MCF 10A (cell line): ENCODE measurements at regions of chr12 and their contacts with region 1.

Region 1: GRCh38 chr12:27523642-27524493 is at the start of gene PPFIBP1:
- DNase-seq: peak; percentile 99
- H3K4me3 Mint-ChIP-seq: peak within 1 kb of the TSS; percentile 85
- H3K27ac Mint-ChIP-seq: peak within 1 kb of the TSS; percentile 90
- H3K4me1 Mint-ChIP-seq: peaks cover 23% of the 10 kb centered on the region
- H3K27me3 Mint-ChIP-seq: no peaks in the 10 kb centered on the region
- CTCF ChIP-seq: no peak
- total RNA-seq, gene PPFIBP1: 82.6 and 87.7 TPM in 2 replicates

Region 2: GRCh38 chr12:27332407-27333301 is 191.2 kb before region 1 on chr12 and contains the start of gene BMAL2:
- CTCF ChIA-PET with region 1: no interaction called
- POLR2A ChIA-PET with region 1: interaction called, 12 read pairs
- intact Hi-C with region 1: no loop called
- DNase-seq: peak; percentile 36
- H3K4me3 Mint-ChIP-seq: peak within 1 kb of the TSS; percentile 86
- H3K27ac Mint-ChIP-seq: peak within 1 kb of the TSS; percentile 98
- H3K4me1 Mint-ChIP-seq: peaks cover 47% of the 10 kb centered on the region
- H3K27me3 Mint-ChIP-seq: no peaks in the 10 kb centered on the region
- CTCF ChIP-seq: no peak
- total RNA-seq, gene BMAL2: 18.0 and 20.0 TPM in 2 replicates

Region 3: GRCh38 chr12:27504507-27504906 is 19.4 kb before region 1 on chr12:
- CTCF ChIA-PET with region 1: no interaction called
- POLR2A ChIA-PET with region 1: interaction called, 11 read pairs
- intact Hi-C with region 1: no loop called
- DNase-seq: no peak
- H3K4me3 Mint-ChIP-seq: no peak overlapping the region
- H3K27ac Mint-ChIP-seq: no peak overlapping the region
- H3K4me1 Mint-ChIP-seq: no peaks in the 10 kb centered on the region
- H3K27me3 Mint-ChIP-seq: no peaks in the 10 kb centered on the region
- CTCF ChIP-seq: no peak

Region 4: GRCh38 chr12:27542628-27543027 is 18.8 kb after region 1 on chr12:
- CTCF ChIA-PET with region 1: interaction called, 17 read pairs
- POLR2A ChIA-PET with region 1: interaction called, 129 read pairs
- intact Hi-C with region 1: loop called (anchors 1 kb)
- DNase-seq: peak; percentile 80
- H3K4me3 Mint-ChIP-seq: peak overlapping the region; percentile 46
- H3K27ac Mint-ChIP-seq: peak overlapping the region; percentile 99
- H3K4me1 Mint-ChIP-seq: peaks cover 40% of the 10 kb centered on the region
- H3K27me3 Mint-ChIP-seq: no peaks in the 10 kb centered on the region
- CTCF ChIP-seq: no peak

Region 5: GRCh38 chr12:27592548-27592947 is 68.7 kb after region 1 on chr12:
- CTCF ChIA-PET with region 1: interaction called, 4 read pairs
- POLR2A ChIA-PET with region 1: interaction called, 30 read pairs
- intact Hi-C with region 1: loop called (anchors 1 kb)
- DNase-seq: peak; percentile 88
- H3K4me3 Mint-ChIP-seq: peak overlapping the region; percentile 30
- H3K27ac Mint-ChIP-seq: peak overlapping the region; percentile 97
- H3K4me1 Mint-ChIP-seq: peaks cover 65% of the 10 kb centered on the region
- H3K27me3 Mint-ChIP-seq: no peaks in the 10 kb centered on the region
- CTCF ChIP-seq: no peak

Region 6: DNA sequence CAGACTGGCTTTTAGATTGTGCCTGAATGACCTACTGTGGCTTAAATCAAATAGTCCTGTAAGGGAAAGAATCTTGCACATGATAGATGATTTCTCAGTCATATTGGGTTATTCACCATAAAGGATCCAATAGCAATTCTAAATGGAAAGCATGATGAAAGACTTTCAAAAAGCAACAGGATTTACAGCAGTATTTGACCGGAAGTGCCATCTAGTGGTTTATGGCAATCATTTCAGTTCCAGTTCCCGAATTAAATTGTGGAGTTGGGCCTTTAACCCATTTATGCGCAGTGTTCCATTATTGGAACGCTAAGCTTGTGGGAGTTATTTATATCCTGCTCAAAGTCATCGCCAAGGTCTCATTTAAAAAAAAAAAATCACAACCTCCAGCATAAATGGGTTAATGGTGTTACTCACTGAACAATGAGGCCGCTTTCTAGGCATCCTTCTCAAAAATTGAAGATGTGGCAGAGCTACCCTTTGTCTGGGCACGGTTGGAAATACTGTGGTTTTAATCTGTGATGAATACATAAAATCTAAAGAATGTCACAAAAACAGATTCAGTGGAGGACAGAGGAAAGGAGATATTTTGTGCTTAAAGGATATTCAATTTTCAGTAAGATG is 111.6 kb after region 1 on chr12:
- CTCF ChIA-PET with region 1: interaction called, 14 read pairs
- POLR2A ChIA-PET with region 1: interaction called, 61 read pairs
- intact Hi-C with region 1: loop called (anchors 1 kb)
- DNase-seq: peak; percentile 70
- H3K4me3 Mint-ChIP-seq: no peak overlapping the region
- H3K27ac Mint-ChIP-seq: no peak overlapping the region
- H3K4me1 Mint-ChIP-seq: no peaks in the 10 kb centered on the region
- H3K27me3 Mint-ChIP-seq: no peaks in the 10 kb centered on the region
- CTCF ChIP-seq: peak; percentile 64